WTC11 (cell line): ENCODE measurements at regions of chr16 and their contacts with region 1.

Region 1: DNA sequence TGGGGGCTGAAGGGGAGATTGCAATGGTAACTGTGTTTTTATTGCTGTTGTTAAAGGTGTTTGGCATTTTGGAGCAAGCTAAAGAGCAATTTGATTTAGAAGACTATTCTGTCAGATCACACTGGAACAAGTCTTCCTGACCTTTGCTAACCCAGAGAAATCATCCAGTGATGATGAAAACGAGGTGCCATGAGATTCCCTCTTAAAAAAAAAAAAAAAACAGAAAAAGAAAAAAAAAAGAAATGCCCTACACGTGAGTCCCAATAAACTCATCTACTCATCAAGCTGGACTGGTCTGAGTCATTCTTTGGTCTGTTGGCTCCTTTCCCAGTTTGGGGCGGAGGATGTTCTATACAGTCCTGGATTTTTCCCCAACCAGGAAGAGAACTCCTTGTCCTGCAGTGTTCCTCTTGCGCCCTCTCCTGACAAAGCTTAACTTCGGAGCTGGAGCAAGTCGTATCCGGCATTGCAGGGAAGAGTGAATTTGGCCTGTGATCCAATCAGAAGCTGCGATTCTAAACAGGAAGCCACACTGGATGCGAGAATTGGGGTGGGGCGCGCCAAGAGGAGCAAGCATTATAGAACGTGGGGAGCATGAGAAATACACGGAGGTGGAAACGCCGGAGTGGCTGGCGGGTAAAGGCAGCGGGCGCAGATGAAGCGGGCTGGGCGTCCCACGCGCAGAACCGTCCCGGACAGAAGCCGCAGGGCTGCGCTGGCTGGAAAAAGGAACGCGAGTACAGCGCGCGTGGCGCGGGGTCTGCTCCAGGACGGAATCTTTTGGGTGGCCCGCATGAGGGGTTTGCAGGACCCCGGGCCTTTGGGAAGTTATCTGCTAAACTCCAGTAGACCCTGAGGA is 22.4 kb upstream of the CRYM start:
- DNase-seq: peak; percentile 86
- ATAC-seq: peak; percentile 86
- H3K4me3 Mint-ChIP-seq: peak overlapping the region; percentile 91
- H3K27ac Mint-ChIP-seq: peak overlapping the region; percentile 24; the same call in 1 of the 2 replicates
- H3K4me1 Mint-ChIP-seq: peaks cover 31% of the 10 kb centered on the region
- H3K27me3 Mint-ChIP-seq: peaks cover 45% of the 10 kb centered on the region
- CTCF ChIP-seq: peak; percentile 38; the same call in 1 of the 2 replicates

Region 2: DNA sequence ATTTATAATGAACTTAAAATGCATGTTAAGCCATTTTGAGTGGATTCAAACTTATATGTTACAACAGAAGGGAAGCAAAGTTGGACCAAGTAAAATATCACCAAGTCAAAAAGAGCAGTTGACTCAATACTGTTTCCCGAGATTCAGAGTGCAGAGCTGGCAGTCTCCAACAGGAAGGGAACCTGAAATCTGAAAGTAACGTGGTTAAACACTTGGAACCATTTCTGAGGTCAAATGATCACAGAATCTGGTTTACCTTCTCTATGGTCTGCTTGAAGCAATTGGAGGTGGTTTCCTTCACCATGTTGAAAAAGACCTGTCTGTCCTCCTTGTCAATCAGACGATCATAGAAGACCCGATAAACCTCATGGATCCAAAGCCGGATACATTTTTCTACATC is 313.5 kb before region 1 on chr16:
- CTCF ChIA-PET with region 1: no interaction called
- POLR2A ChIA-PET with region 1: no interaction called
- DNase-seq: no peak
- ATAC-seq: no peak
- H3K4me3 Mint-ChIP-seq: no peak overlapping the region
- H3K27ac Mint-ChIP-seq: no peak overlapping the region
- H3K4me1 Mint-ChIP-seq: no peaks in the 10 kb centered on the region
- H3K27me3 Mint-ChIP-seq: no peaks in the 10 kb centered on the region
- CTCF ChIP-seq: no peak

Region 3: DNA sequence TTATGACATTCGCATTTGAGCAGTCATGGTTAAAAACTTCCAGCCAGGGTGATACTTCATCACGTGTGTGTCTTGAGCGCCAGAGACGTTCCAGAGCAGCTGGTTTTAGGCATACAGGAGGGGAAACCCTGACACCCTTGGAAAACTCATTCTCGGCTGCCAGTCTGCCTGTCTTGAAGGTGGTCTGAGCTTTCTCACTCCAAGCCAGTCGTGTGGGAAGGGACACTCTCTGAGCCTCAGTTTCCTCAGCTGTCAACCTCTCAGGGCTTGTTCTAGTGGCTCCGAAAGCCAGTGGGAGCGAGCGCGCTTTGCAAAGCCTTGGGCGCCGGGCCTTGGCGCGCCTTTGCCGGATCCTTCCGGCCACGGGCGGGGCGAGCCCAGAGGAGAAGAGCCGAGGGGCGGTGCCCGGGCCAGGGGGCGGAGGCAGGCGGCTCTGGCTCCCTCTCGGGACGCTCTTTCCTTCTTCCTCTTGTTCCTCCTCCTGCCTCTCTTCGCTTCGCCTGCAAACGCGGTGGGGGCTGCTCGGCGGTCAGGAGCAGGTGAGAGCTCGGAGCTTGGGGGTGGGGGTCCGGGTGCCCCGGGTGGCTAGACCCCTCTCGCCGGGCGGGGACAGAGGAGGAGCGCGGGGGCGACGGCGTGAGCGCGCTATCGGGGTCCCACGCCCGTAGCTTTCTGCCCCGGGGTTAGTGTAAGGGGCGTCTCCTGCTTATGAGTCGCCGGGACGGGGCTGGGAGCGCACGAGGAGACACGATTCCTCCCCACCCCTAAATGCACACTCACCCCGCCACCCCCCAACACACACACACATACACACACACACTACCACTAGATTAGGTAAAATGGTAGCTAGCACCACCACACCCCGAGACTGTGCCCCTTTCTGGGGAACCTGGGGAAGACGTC is 142.1 kb before region 1 on chr16 and contains the start of gene LDAF1:
- CTCF ChIA-PET with region 1: interaction called, 122 read pairs
- POLR2A ChIA-PET with region 1: interaction called, 8 read pairs
- DNase-seq: peak; percentile 89
- ATAC-seq: peak; percentile 84
- H3K4me3 Mint-ChIP-seq: peak within 1 kb of the TSS; percentile 86
- H3K27ac Mint-ChIP-seq: peak within 1 kb of the TSS; percentile 17
- H3K4me1 Mint-ChIP-seq: peaks cover 18% of the 10 kb centered on the region
- H3K27me3 Mint-ChIP-seq: peaks cover 9% of the 10 kb centered on the region
- CTCF ChIP-seq: no peak
- total RNA-seq, gene LDAF1: 34.6 to 42.8 TPM (median 36.4 TPM) in 3 replicates

Region 4: DNA sequence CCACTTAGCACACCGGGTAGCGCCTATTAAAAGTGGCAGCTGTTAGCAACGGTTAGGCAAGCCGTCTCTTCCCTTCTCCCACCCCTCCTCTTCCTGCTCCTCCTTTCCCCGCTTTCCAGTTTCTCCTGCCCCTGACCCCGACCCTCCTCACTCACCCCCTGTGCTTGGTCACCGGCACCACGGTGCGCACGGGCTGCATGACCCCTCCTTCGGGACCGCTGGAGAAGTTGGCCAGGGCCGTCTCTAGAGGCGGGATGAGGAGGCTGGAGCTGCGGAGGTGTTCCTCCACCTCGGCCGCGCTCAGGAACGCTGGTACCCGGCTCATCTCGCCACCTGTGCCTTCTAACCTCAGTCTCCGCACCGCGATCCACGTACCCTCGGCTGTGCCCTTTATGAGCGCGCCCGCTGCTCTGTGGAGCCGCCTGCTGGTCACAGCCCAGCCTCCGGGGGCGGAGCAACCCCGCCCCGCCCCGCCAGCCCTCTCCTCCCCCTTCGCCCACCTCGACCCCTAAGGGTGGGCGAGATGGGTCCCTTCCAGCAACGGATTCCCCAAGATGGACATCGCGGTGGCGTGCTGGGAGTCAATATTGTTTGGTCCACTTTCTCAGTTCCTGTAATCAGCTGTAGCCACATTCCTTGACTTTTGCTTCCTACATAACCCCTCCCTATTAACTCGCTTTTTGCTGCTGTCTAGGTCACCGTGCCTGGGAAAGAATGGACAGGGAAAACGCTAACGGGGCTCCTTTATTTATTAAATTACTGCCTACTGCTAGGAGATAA is 22.4 kb before region 1 on chr16 and contains the start of gene CRYM:
- CTCF ChIA-PET with region 1: interaction called, 47 read pairs
- POLR2A ChIA-PET with region 1: interaction called, 4 read pairs
- DNase-seq: peak; percentile 82
- ATAC-seq: peak; percentile 98
- H3K4me3 Mint-ChIP-seq: peak within 1 kb of the TSS; percentile 80
- H3K27ac Mint-ChIP-seq: no peak within 1 kb of the TSS
- H3K4me1 Mint-ChIP-seq: peaks cover 27% of the 10 kb centered on the region
- H3K27me3 Mint-ChIP-seq: peaks cover 19% of the 10 kb centered on the region
- CTCF ChIP-seq: peak; percentile 78
- total RNA-seq, gene CRYM: 12.7 to 14.9 TPM (median 12.9 TPM) in 3 replicates

Region 5: GRCh38 chr16:21283521-21284289 is 16.8 kb before region 1 on chr16:
- CTCF ChIA-PET with region 1: interaction called, 47 read pairs
- POLR2A ChIA-PET with region 1: interaction called, 4 read pairs
- DNase-seq: peak; percentile 79
- ATAC-seq: peak; percentile 95
- H3K4me3 Mint-ChIP-seq: peak overlapping the region; percentile 70
- H3K27ac Mint-ChIP-seq: no peak overlapping the region
- H3K4me1 Mint-ChIP-seq: peaks cover 10% of the 10 kb centered on the region
- H3K27me3 Mint-ChIP-seq: peaks cover 24% of the 10 kb centered on the region
- CTCF ChIP-seq: no peak